Heart right ventricle (tissue), 16 donors: ENCODE measurements at regions of chr22 and their contacts with region 1.

Region 1: DNA sequence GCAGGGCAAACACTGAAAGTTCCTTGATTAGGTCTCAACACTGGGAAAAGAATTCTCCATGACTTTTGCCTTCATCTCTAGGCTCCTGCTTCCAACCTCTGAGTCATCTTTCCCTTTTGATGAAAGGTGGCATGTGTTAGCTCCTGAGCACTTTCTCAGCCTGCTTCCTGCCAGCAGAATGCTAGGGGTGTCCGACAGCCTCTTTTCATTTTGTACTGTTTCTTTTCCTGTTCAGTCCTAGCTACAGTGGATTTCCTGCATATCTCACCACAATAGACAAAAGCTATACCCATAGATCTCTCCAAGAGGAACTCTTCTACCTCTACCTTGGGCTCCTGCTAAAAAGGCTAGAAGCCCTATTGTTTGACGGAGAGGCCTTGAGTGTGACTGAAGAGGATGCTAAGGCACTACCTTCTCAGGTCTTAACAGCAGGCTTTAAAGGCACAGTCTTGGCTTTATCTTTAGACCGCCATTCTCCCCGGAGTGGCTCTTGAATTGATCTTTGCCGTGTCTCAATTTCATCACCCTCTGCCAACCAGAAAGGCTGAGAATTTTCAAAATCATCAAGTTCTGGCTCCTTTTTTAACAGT is 145.5 kb downstream of the RBFOX2 start:
- DNase-seq: peak in 1 of 2 donors; percentile 38
- ATAC-seq: peak; percentile 31 to 88 (median 78)
- H3K4me3 ChIP-seq: no peak overlapping the region
- H3K27ac ChIP-seq: peak overlapping the region in 9 of 10 donors; percentile 50 to 84 (median 78)
- H3K4me1 ChIP-seq: peaks cover 13 to 83% (median 53%) of the 10 kb centered on the region in 9 donors
- H3K27me3 ChIP-seq: no peaks in the 10 kb centered on the region
- CTCF ChIP-seq: no peak

Region 2: GRCh38 chr22:35846804-35847203 is 36.3 kb before region 1 on chr22:
- intact Hi-C with region 1: loop called in 1 of 10 experiments (anchors 5 kb)
- DNase-seq: no peak
- ATAC-seq: no peak
- H3K4me3 ChIP-seq: no peak overlapping the region
- H3K27ac ChIP-seq: peak overlapping the region in 1 of 10 donors; percentile 8
- H3K4me1 ChIP-seq: peaks cover 0 to 69% (median 31%) of the 10 kb centered on the region in 9 donors
- H3K27me3 ChIP-seq: no peaks in the 10 kb centered on the region
- CTCF ChIP-seq: no peak